ENCODE measurements at regions of chr7 and their contacts with region 1.

Region 1: GRCh38 chr7:40822861-40823260 is 688.1 kb downstream of the SUGCT start:
- DNase-seq: peak; percentile 62
- ATAC-seq: peak; percentile 63
- H3K4me3 ChIP-seq: no peak overlapping the region
- H3K27ac ChIP-seq: peak overlapping the region; percentile 63
- H3K4me1 ChIP-seq: peaks cover 43% of the 10 kb centered on the region
- H3K27me3 ChIP-seq: no peaks in the 10 kb centered on the region
- CTCF ChIP-seq: no peak

Region 2: GRCh38 chr7:40887099-40887498 is 64.2 kb after region 1 on chr7:
- CTCF ChIA-PET with region 1: no interaction called
- POLR2A ChIA-PET with region 1: no interaction called
- intact Hi-C with region 1: no loop called
- DNase-seq: peak; percentile 60
- ATAC-seq: peak; percentile 88
- H3K4me3 ChIP-seq: no peak overlapping the region
- H3K27ac ChIP-seq: no peak overlapping the region
- H3K4me1 ChIP-seq: peaks cover 10% of the 10 kb centered on the region
- H3K27me3 ChIP-seq: no peaks in the 10 kb centered on the region
- CTCF ChIP-seq: no peak

Region 3: DNA sequence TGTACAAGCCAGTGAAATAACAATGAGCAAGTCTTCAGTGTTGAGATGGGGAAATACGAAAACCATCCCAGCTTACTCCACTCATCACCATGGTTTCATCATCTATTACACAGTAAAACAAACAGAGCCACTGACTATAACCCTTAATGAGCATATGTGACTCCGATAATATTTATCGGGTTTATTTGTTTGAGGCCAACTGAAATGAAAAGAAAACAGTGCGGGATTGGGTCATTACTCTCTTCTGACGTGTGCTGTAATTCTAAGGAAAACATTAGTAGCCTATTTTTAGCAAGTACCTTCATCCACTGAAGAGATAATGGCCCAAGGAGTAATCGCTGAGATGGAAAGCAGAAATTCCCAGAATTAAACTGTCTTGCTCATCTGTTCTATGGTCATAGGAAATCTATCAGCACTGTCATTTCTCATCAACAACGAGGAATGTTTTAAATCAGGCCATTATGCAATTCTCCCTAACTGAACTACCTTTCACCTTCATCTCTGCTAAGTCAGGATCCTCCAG is 163.6 kb after region 1 on chr7:
- CTCF ChIA-PET with region 1: no interaction called
- POLR2A ChIA-PET with region 1: no interaction called
- intact Hi-C with region 1: loop called (anchors 5 kb)
- DNase-seq: peak; percentile 76
- ATAC-seq: peak; percentile 97
- H3K4me3 ChIP-seq: peak overlapping the region; percentile 22; the same call in 1 of the 2 replicates
- H3K27ac ChIP-seq: peak overlapping the region; percentile 90
- H3K4me1 ChIP-seq: peaks cover 16% of the 10 kb centered on the region
- H3K27me3 ChIP-seq: no peaks in the 10 kb centered on the region
- CTCF ChIP-seq: no peak

Region 4: DNA sequence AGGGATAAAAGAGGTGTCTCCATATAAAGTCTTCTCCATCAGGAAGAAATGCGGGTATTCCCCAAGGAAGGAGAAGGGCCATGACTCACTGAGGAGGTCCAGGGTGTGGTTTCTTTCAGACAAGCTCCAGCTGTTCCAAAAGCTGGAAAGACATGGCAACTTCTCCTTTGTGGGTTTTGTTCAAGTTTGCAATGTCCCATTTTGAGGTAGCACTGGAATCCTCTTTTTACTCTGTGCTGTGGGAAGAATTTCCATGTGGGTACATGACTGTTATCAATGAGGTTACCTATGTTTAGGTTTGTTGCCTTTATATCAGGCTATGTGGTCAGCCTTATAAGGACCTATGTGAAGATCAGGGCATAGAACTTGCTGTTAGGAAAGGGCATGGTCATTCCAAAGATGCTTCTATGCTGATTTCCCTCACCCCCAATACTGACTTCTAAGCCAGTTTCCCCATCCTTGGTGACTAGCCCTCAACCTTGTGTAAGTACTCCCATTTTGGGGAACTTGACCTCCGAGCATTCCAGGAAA is 182.6 kb after region 1 on chr7:
- CTCF ChIA-PET with region 1: interaction called, 3 read pairs
- POLR2A ChIA-PET with region 1: no interaction called
- intact Hi-C with region 1: loop called (anchors 5 kb)
- DNase-seq: peak; percentile 81
- ATAC-seq: peak; percentile 43
- H3K4me3 ChIP-seq: no peak overlapping the region
- H3K27ac ChIP-seq: peak overlapping the region; percentile 84
- H3K4me1 ChIP-seq: peaks cover 54% of the 10 kb centered on the region
- H3K27me3 ChIP-seq: no peaks in the 10 kb centered on the region
- CTCF ChIP-seq: no peak

Region 5: GRCh38 chr7:41183741-41184140 is 360.9 kb after region 1 on chr7:
- CTCF ChIA-PET with region 1: no interaction called
- POLR2A ChIA-PET with region 1: no interaction called
- intact Hi-C with region 1: loop called (anchors 5 kb)
- DNase-seq: peak; percentile 86
- ATAC-seq: peak; percentile 62
- H3K4me3 ChIP-seq: no peak overlapping the region
- H3K27ac ChIP-seq: peak overlapping the region; percentile 99
- H3K4me1 ChIP-seq: peaks cover 61% of the 10 kb centered on the region
- H3K27me3 ChIP-seq: no peaks in the 10 kb centered on the region
- CTCF ChIP-seq: 0 out of 2 replicates have a peak, but pooled peaks have one; percentile 17